ENCODE measurements at regions of chr5 and their contacts with region 1.

Region 1: GRCh38 chr5:140401362-140402257 is at the start of gene ANKHD1:
- DNase-seq: peak; percentile 89 to 99 (median 98)
- ATAC-seq: peak; percentile 88
- H3K4me3 ChIP-seq: peak within 1 kb of the TSS; percentile 87
- H3K4me3 Mint-ChIP-seq: peak within 1 kb of the TSS in 1 of 10 donors; percentile 86
- H3K27ac ChIP-seq: peak within 1 kb of the TSS; percentile 90
- H3K27ac Mint-ChIP-seq: peak within 1 kb of the TSS in 2 of 9 donors; percentile 90 to 91
- H3K4me1 ChIP-seq: peaks cover 11 to 30% of the 10 kb centered on the region in 2 donors
- H3K4me1 Mint-ChIP-seq: peaks cover 23 to 45% (median 38%) of the 10 kb centered on the region in 7 donors
- H3K27me3 ChIP-seq: no peaks in the 10 kb centered on the region
- H3K27me3 Mint-ChIP-seq: no peaks in the 10 kb centered on the region
- total RNA-seq, gene ANKHD1: 145 to 240 (median 217) TPM

Region 2: DNA sequence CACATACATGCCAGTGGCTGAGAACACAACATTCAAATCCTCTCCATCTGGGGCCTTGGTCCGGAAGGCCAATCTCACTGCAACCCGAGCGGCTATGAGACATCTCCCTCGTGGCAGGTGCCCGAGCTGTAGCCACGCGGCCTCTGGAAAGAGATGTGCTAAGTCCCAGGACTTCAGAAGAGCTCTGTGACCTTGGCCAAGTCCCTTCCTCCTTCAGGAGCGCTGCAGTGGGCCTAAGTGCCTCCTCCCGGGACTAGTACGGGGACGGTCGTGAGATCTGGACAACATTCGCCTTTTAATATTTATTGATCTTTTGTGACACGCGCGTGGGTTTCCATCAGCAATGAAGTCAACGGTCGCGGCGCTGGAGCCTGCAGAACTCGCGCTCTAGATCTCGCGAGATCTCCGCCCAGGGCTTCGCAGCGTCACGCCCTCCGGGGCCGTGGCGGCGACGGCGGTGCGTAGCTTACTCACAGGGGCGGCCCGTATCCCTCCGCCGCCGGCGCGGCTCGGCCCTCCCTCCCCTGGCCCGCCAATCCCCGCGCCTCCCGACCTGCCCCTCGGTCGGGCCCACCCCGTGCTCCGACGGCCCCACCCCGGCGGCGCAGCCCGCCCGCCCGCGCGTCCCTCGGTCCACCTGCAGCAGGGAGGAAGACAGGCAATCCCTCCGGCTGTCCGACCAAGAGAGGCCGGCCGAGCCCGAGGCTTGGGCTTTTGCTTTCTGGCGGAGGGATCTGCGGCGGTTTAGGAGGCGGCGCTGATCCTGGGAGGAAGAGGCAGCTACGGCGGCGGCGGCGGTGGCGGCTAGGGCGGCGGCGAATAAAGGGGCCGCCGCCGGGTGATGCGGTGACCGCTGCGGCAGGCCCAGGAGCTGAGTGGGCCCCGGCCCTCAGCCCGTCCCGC is 840.6 kb before region 1 on chr5 and contains the start of gene UBE2D2:
- CTCF ChIA-PET with region 1: no interaction called
- POLR2A ChIA-PET with region 1: interaction called, 3 read pairs
- intact Hi-C with region 1: loop called (anchors 2 to 5 kb)
- DNase-seq: peak; percentile 95 to 98 (median 97)
- ATAC-seq: peak; percentile 94
- H3K4me3 ChIP-seq: peak within 1 kb of the TSS; percentile 85
- H3K4me3 Mint-ChIP-seq: peak within 1 kb of the TSS; percentile 90 to 100 (median 98)
- H3K27ac ChIP-seq: peak within 1 kb of the TSS; percentile 92
- H3K27ac Mint-ChIP-seq: peak within 1 kb of the TSS; percentile 88 to 98 (median 95)
- H3K4me1 ChIP-seq: peaks cover 26 to 36% of the 10 kb centered on the region in 2 donors
- H3K4me1 Mint-ChIP-seq: peaks cover 28 to 39% (median 34%) of the 10 kb centered on the region in 7 donors
- H3K27me3 ChIP-seq: no peaks in the 10 kb centered on the region
- H3K27me3 Mint-ChIP-seq: no peaks in the 10 kb centered on the region
- total RNA-seq, gene UBE2D2: 145 to 214 (median 184) TPM

Region 3: DNA sequence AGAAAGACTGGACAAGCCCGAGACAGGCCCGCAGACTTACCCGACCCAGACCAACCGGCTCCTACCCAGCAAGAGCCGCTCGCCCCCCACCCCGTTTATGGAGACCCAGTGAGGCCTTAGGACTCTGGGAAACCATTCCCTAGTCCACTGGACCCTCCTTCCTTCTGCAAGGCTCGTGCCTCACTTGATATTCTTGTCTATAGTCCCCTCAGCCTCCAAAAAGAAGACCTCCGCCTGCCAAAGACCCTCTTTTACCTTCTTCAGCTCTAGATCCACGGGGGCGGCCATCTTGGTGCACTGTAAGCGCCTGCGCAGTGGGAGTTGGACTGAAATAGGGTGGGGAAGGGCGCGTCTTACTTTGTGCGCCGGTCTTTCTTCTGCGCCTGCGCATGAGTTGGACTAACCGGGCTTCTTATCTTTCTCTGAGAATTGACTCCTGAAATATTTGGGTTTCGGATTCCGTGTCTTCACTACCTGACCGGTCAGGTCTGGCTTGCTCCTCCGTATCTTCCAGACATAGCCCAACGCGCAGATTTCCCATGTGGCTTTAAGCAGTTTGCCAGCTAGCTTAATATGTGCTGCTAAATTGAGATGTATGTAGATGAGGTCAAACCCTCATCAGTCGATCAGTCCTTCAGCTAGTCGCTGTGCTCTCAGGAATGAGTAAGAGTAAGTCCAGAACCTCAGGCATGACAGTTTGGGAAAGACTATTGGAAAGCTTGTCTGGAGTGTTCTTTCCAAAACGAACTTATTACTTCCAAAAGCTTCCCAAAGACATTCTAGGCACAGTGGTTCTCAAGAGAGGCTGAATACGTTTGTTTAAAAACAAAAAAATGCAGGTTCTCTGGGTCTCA is 98.6 kb before region 1 on chr5 and contains the start of gene PFDN1:
- CTCF ChIA-PET with region 1: no interaction called
- POLR2A ChIA-PET with region 1: no interaction called
- intact Hi-C with region 1: loop called (anchors 1 kb)
- DNase-seq: peak; percentile 79 to 94 (median 89)
- ATAC-seq: peak; percentile 99
- H3K4me3 ChIP-seq: peak within 1 kb of the TSS; percentile 90
- H3K4me3 Mint-ChIP-seq: peak within 1 kb of the TSS; percentile 92 to 100 (median 98)
- H3K27ac ChIP-seq: peak within 1 kb of the TSS; percentile 91
- H3K27ac Mint-ChIP-seq: peak within 1 kb of the TSS; percentile 95 to 100 (median 98)
- H3K4me1 ChIP-seq: peaks cover 10 to 11% of the 10 kb centered on the region in 2 donors
- H3K4me1 Mint-ChIP-seq: peaks cover 4 to 39% (median 33%) of the 10 kb centered on the region in 7 donors
- H3K27me3 ChIP-seq: no peaks in the 10 kb centered on the region
- H3K27me3 Mint-ChIP-seq: peaks cover 0 to 9% (median 5%) of the 10 kb centered on the region in 5 donors
- total RNA-seq, gene PFDN1: 24.8 to 52.7 (median 28.2) TPM

Region 4: DNA sequence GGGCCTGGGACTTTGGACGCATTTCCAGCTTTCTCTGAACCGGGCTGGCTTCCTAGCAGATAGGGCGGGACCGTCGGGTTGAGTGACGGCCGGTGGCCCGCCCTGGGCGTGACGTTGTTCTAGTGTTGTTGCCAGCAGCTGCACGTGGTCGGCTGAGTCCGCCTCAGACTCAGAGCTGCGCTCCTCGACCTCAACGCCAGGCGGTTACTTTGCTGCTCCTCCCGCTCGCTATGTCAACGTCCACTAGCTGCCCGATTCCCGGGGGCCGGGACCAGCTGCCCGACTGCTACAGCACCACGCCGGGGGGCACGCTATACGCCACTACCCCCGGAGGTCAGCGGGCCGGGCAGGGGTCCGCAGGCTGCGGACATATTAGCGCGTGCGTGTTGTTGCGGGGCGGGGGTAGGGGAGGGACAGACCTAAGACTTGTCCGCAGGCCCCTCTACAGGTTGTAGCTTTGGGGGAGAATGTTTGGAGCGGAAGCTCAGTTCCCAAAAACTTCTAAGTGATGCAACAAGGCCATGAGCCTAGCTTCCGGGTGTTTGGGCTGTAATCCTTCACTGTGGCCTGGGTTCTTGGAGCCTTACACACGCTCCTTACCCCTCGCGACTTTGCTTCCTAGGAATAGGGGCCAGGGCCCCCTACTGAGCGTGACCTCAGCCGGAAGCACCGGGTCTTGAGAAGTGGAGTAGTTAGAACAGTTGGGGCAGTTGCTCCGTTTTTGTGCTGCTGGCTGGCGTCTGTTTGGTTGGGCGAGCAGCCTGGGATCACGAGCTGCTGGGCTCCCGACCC is 146.1 kb after region 1 on chr5 and contains the start of gene EIF4EBP3:
- CTCF ChIA-PET with region 1: no interaction called
- POLR2A ChIA-PET with region 1: interaction called, 19 read pairs
- intact Hi-C with region 1: loop called (anchors 1 kb)
- DNase-seq: peak; percentile 76 to 90 (median 88)
- ATAC-seq: peak; percentile 98
- H3K4me3 ChIP-seq: peak within 1 kb of the TSS; percentile 83
- H3K4me3 Mint-ChIP-seq: peak within 1 kb of the TSS; percentile 85 to 99 (median 92)
- H3K27ac ChIP-seq: peak within 1 kb of the TSS; percentile 89
- H3K27ac Mint-ChIP-seq: peak within 1 kb of the TSS; percentile 93 to 99 (median 98)
- H3K4me1 ChIP-seq: peaks cover 12 to 20% of the 10 kb centered on the region in 2 donors
- H3K4me1 Mint-ChIP-seq: peaks cover 22 to 49% (median 37%) of the 10 kb centered on the region in 7 donors
- H3K27me3 ChIP-seq: no peaks in the 10 kb centered on the region
- H3K27me3 Mint-ChIP-seq: no peaks in the 10 kb centered on the region
- total RNA-seq, gene EIF4EBP3: 12.5 to 19.5 (median 16.2) TPM

Region 5: GRCh38 chr5:140639148-140639979 is 237.8 kb after region 1 on chr5 and contains the start of gene TMCO6:
- CTCF ChIA-PET with region 1: interaction called, 5 read pairs
- POLR2A ChIA-PET with region 1: interaction called, 7 read pairs
- intact Hi-C with region 1: loop called (anchors 1 kb)
- DNase-seq: peak; percentile 89 to 96 (median 94)
- ATAC-seq: peak; percentile 99
- H3K4me3 ChIP-seq: peak within 1 kb of the TSS; percentile 66
- H3K4me3 Mint-ChIP-seq: peak within 1 kb of the TSS; percentile 86 to 97 (median 93)
- H3K27ac ChIP-seq: peak within 1 kb of the TSS; percentile 79
- H3K27ac Mint-ChIP-seq: peak within 1 kb of the TSS; percentile 87 to 100 (median 93)
- H3K4me1 ChIP-seq: peaks cover 6% of the 10 kb centered on the region in 2 donors
- H3K4me1 Mint-ChIP-seq: peaks cover 21 to 54% (median 40%) of the 10 kb centered on the region in 7 donors
- H3K27me3 ChIP-seq: no peaks in the 10 kb centered on the region
- H3K27me3 Mint-ChIP-seq: no peaks in the 10 kb centered on the region
- total RNA-seq, gene TMCO6: 24.5 to 55.3 (median 36.4) TPM

Region 6: GRCh38 chr5:140700177-140701144 is 298.9 kb after region 1 on chr5 and contains the start of gene ZMAT2:
- CTCF ChIA-PET with region 1: no interaction called
- POLR2A ChIA-PET with region 1: interaction called, 16 read pairs
- intact Hi-C with region 1: loop called (anchors 1 kb)
- DNase-seq: peak; percentile 74 to 97 (median 92)
- ATAC-seq: peak; percentile 100
- H3K4me3 ChIP-seq: peak within 1 kb of the TSS; percentile 78
- H3K4me3 Mint-ChIP-seq: peak within 1 kb of the TSS; percentile 93 to 100 (median 98)
- H3K27ac ChIP-seq: peak within 1 kb of the TSS; percentile 87
- H3K27ac Mint-ChIP-seq: peak within 1 kb of the TSS; percentile 90 to 99 (median 97)
- H3K4me1 ChIP-seq: peaks cover 4 to 14% of the 10 kb centered on the region in 2 donors
- H3K4me1 Mint-ChIP-seq: peaks cover 18 to 35% (median 29%) of the 10 kb centered on the region in 7 donors
- H3K27me3 ChIP-seq: no peaks in the 10 kb centered on the region
- H3K27me3 Mint-ChIP-seq: no peaks in the 10 kb centered on the region
- total RNA-seq, gene ZMAT2: 37.7 to 63.0 (median 55.1) TPM

Region 7: DNA sequence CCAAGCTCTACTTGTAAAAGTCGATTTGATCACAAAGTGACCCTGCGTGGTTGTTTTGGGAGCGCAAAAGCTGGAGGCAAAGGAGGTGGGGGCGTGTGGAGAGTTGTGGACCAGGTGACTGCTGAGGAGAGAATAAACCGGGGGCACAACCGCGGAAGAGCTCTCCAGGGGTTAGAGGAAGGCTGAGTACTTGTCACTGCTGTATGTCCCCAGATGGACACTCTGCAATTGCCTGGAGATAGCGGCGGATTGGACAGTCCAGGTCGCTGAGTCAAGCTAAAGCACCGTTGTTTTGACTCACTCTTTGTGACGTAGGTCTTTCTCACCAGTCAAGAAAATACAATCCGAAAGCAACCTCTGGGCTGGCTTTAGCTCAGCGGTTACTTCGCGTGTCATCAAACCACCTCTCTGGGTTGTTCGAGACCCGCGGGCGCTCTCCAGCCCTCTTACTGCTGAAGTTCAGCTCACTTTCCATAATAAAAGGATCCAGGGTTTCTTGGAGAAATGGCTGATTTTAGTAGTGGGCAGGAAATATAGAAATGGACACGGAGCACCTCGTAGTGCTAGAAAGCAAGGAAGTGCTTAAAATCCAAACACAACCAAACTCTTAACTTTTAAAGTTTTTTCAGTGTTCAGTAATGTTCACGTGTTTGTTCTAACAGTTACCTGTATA is 324.3 kb after region 1 on chr5:
- CTCF ChIA-PET with region 1: no interaction called
- POLR2A ChIA-PET with region 1: no interaction called
- intact Hi-C with region 1: no loop called
- DNase-seq: peak; percentile 9 to 80 (median 45)
- ATAC-seq: peak; percentile 93
- H3K4me3 ChIP-seq: peak overlapping the region; percentile 40
- H3K4me3 Mint-ChIP-seq: peak overlapping the region; percentile 37 to 81 (median 68)
- H3K27ac ChIP-seq: no peak overlapping the region
- H3K27ac Mint-ChIP-seq: peak overlapping the region in 7 of 9 donors; percentile 51 to 93 (median 77)
- H3K4me1 ChIP-seq: no peaks in the 10 kb centered on the region
- H3K4me1 Mint-ChIP-seq: peaks cover 0 to 22% (median 17%) of the 10 kb centered on the region in 7 donors
- H3K27me3 ChIP-seq: peaks cover 0 to 4% of the 10 kb centered on the region in 2 donors
- H3K27me3 Mint-ChIP-seq: peaks cover 26 to 49% (median 35%) of the 10 kb centered on the region in 5 donors

Region 8: GRCh38 chr5:142108432-142109330 is 1707.1 kb after region 1 on chr5 and contains the start of gene NDFIP1:
- CTCF ChIA-PET with region 1: no interaction called
- POLR2A ChIA-PET with region 1: no interaction called
- intact Hi-C with region 1: loop called in 1 of 2 experiments (anchors 10 kb)
- DNase-seq: peak; percentile 80 to 93 (median 91)
- ATAC-seq: peak; percentile 89
- H3K4me3 ChIP-seq: peak within 1 kb of the TSS; percentile 75
- H3K4me3 Mint-ChIP-seq: peak within 1 kb of the TSS; percentile 94 to 100 (median 98)
- H3K27ac ChIP-seq: peak within 1 kb of the TSS; percentile 99
- H3K27ac Mint-ChIP-seq: peak within 1 kb of the TSS; percentile 92 to 100 (median 98)
- H3K4me1 ChIP-seq: peaks cover 28 to 64% of the 10 kb centered on the region in 2 donors
- H3K4me1 Mint-ChIP-seq: peaks cover 38 to 78% (median 71%) of the 10 kb centered on the region in 7 donors
- H3K27me3 ChIP-seq: no peaks in the 10 kb centered on the region
- H3K27me3 Mint-ChIP-seq: no peaks in the 10 kb centered on the region
- total RNA-seq, gene NDFIP1: 53.0 to 136 (median 95.5) TPM